AG04449 (cell line): ENCODE measurements at regions of chr1 and their contacts with region 1.

Region 1: GRCh38 chr1:182962554-182963115 is 9.7 kb upstream of the SHCBP1L start:
- DNase-seq: peak; percentile 71
- H3K4me3 ChIP-seq: peak overlapping the region; percentile 34
- CTCF ChIP-seq: peak; percentile 77

Region 2: GRCh38 chr1:183023601-183024316 is 61.1 kb after region 1 on chr1:
- CTCF ChIA-PET with region 1: interaction called, 11 read pairs
- POLR2A ChIA-PET with region 1: interaction called, 4 read pairs
- DNase-seq: no peak
- H3K4me3 ChIP-seq: peak overlapping the region; percentile 87
- CTCF ChIP-seq: peak; percentile 64

Region 3: GRCh38 chr1:183227963-183228649 is 265.5 kb after region 1 on chr1:
- CTCF ChIA-PET with region 1: interaction called, 37 read pairs
- POLR2A ChIA-PET with region 1: no interaction called
- DNase-seq: no peak
- H3K4me3 ChIP-seq: no peak overlapping the region
- CTCF ChIP-seq: peak; percentile 79

Region 4: GRCh38 chr1:183281553-183282091 is 319.0 kb after region 1 on chr1:
- CTCF ChIA-PET with region 1: interaction called, 61 read pairs
- POLR2A ChIA-PET with region 1: interaction called, 3 read pairs
- DNase-seq: no peak
- H3K4me3 ChIP-seq: no peak overlapping the region
- CTCF ChIP-seq: peak; percentile 93